BJ (cell line): ENCODE measurements at regions of chr12 and their contacts with region 1.

Region 1: DNA sequence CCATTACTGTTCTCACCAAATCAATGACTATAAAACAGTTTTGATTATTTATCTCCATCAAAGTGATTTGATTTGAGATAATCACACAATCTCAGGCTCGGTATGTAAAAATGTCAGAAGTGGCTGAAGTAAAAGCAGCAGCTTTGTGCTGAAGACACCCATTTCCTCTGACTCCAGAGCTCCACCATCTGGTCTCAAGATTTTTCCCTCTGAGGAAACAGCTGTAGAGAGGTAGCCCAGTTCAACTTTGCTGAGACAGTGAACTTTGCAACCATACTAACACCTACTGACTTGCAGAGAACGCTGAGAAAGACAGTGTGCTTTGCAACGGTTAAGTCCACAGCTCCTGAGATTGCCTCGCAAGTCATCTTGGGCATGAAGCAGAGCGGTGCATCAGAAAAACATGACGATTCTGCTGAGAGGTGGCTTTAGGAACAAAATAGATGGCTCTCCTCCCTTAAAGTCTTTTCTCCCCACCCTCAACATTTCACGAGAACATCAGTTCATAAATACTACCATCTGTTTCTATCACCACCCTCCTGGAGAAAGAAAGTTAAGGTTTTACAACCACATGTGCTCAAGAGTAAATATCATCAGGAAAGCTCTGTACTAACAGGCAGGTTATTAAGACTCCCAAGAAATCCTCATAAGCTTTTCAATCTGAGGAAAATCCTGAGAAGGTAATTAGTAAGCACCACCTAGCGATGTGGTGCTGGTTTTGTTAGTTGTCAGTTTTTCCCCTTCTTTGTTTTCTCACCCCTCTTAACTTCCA is 34.8 kb downstream of the HIGD1C start:
- DNase-seq: peak; percentile 21
- H3K4me3 ChIP-seq: no peak overlapping the region
- H3K27me3 ChIP-seq: no peaks in the 10 kb centered on the region
- CTCF ChIP-seq: peak; percentile 67

Region 2: GRCh38 chr12:49503674-49504180 is 1483.4 kb before region 1 on chr12:
- CTCF ChIA-PET with region 1: no interaction called
- POLR2A ChIA-PET with region 1: no interaction called
- DNase-seq: no peak
- H3K4me3 ChIP-seq: no peak overlapping the region
- H3K27me3 ChIP-seq: no peaks in the 10 kb centered on the region
- CTCF ChIP-seq: no peak

Region 3: GRCh38 chr12:50763639-50764285 is 223.4 kb before region 1 on chr12 and contains the start of gene ATF1:
- CTCF ChIA-PET with region 1: interaction called, 64 read pairs
- POLR2A ChIA-PET with region 1: interaction called, 4 read pairs
- DNase-seq: peak; percentile 55
- H3K4me3 ChIP-seq: peak within 1 kb of the TSS; percentile 92
- H3K27me3 ChIP-seq: no peaks in the 10 kb centered on the region
- CTCF ChIP-seq: no peak
- polyA plus RNA-seq, gene ATF1: 69.3 and 72.5 TPM in 2 replicates

Region 4: GRCh38 chr12:50825372-50825838 is 161.7 kb before region 1 on chr12:
- CTCF ChIA-PET with region 1: interaction called, 55 read pairs
- POLR2A ChIA-PET with region 1: no interaction called
- DNase-seq: peak; percentile 41
- H3K4me3 ChIP-seq: no peak overlapping the region
- H3K27me3 ChIP-seq: no peaks in the 10 kb centered on the region
- CTCF ChIP-seq: peak; percentile 38; the same call in 1 of the 2 replicates

Region 5: DNA sequence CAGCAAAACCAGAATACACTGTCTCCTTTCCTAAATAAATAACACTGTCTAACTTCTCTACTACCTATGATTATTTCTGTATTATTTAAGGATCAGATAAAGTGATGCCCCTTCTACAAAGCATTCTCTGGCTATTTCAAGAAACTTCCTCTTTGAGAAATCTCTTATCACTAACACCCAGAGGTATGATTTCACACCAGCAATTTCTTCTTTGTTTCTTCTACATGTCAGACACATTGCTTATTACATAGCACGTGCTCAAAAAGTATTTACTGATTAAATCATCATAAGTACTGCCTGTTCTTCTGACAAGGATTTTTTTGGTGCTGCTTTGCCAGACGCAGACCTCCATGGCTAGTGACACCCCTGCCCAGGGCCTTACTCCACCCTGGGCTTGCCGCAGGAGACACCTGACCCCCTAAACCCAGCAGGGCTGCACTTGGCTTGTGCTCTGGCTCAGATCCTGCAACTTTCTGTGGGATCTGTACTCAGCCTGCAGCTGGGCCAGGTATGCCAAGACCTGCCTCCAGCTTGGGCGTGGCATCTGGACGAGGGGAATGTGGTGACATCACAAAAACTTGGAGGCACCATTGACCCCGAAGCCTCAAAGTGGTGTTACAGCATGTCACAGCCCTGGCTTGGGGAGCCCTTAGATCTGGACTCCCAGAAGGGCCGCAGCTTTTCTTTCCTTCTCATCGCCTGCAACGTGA is 50.2 kb before region 1 on chr12:
- CTCF ChIA-PET with region 1: no interaction called
- POLR2A ChIA-PET with region 1: no interaction called
- DNase-seq: no peak
- H3K4me3 ChIP-seq: no peak overlapping the region
- H3K27me3 ChIP-seq: no peaks in the 10 kb centered on the region
- CTCF ChIP-seq: no peak

Region 6: DNA sequence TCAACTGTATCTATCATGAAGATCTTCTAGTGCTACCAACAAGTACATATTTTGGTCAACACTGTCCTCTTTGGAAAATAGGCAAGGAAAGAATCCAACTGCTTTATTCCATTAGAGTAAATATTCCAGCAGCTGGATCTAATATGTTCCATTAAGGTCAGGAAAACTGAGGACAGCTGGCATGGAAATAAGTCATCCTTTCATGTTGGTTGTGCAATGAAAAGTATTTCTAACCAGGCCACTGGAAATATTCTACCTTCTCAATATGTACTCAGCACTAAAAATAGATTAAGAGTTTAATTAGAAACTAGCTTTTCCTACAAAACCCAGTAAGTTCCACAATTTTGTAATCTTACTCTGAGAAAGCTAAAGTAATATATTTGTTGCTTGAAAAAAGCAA is 15.2 kb before region 1 on chr12:
- CTCF ChIA-PET with region 1: interaction called, 10 read pairs
- POLR2A ChIA-PET with region 1: no interaction called
- DNase-seq: peak; percentile 52
- H3K4me3 ChIP-seq: no peak overlapping the region
- H3K27me3 ChIP-seq: no peaks in the 10 kb centered on the region
- CTCF ChIP-seq: no peak

Region 7: DNA sequence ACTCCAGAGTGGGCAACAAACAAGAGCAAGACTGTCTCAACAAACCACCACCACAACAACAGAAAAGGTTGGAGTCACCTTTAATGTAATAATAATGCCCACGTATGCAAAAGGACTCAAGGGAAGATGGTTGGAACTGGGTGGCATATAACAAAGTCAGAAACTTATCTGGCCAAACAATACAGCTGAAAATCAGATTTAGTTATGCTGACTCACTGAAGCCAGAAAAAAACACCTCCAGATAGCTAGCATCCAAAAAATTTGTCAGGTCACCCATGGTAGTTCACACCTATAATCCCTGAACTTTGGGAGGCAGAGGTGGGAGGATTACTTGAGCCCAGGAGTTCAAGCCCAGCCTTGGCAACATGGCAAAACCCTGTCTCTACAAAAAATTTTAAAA is 14.6 kb after region 1 on chr12:
- CTCF ChIA-PET with region 1: interaction called, 10 read pairs
- POLR2A ChIA-PET with region 1: no interaction called
- DNase-seq: no peak
- H3K4me3 ChIP-seq: no peak overlapping the region
- H3K27me3 ChIP-seq: no peaks in the 10 kb centered on the region
- CTCF ChIP-seq: no peak

Region 8: DNA sequence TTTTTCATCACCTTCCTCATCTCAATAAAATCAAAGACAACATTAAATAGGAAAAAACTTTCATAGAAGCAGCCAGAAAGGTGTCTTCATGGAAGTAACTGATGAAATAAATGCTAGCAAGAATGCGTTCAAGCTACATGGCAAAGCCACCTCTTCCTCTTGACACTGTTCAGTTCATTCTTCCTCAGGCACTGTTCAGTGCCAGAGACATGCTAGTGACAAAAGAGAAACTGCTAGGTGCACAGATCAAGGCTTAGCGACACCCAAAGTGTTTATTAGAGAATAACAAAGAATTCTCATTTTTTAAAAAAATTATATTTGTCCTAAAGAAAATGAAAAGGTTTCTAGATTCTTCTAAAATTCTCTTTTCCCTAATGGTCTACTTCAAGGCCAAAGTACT is 31.8 kb after region 1 on chr12:
- CTCF ChIA-PET with region 1: interaction called, 6 read pairs
- POLR2A ChIA-PET with region 1: interaction called, 11 read pairs
- DNase-seq: no peak
- H3K4me3 ChIP-seq: no peak overlapping the region
- H3K27me3 ChIP-seq: no peaks in the 10 kb centered on the region
- CTCF ChIP-seq: no peak

Region 9: GRCh38 chr12:51025836-51026638 is 38.9 kb after region 1 on chr12 and contains the start of gene SLC11A2:
- CTCF ChIA-PET with region 1: interaction called, 12 read pairs
- POLR2A ChIA-PET with region 1: no interaction called
- DNase-seq: peak; percentile 52
- H3K4me3 ChIP-seq: peak within 1 kb of the TSS; percentile 90
- H3K27me3 ChIP-seq: no peaks in the 10 kb centered on the region
- CTCF ChIP-seq: no peak
- polyA plus RNA-seq, gene SLC11A2: 51.4 and 55.4 TPM in 2 replicates